ENCODE measurements at regions of chr10 and their contacts with region 1.

Region 1: GRCh38 chr10:86899670-86900276 is 57.6 kb downstream of the MMRN2 start:
- DNase-seq: no peak
- ATAC-seq: peak; percentile 45
- H3K4me3 Mint-ChIP-seq: no peak overlapping the region
- H3K27ac Mint-ChIP-seq: no peak overlapping the region
- H3K4me1 Mint-ChIP-seq: no peaks in the 10 kb centered on the region
- H3K27me3 Mint-ChIP-seq: no peaks in the 10 kb centered on the region
- CTCF ChIP-seq: peak; percentile 45

Region 2: GRCh38 chr10:86688398-86688921 is 211.3 kb before region 1 on chr10:
- CTCF ChIA-PET with region 1: interaction called, 31 read pairs
- POLR2A ChIA-PET with region 1: no interaction called
- intact Hi-C with region 1: loop called (anchors 1 kb)
- DNase-seq: peak; percentile 32
- ATAC-seq: peak; percentile 93
- H3K4me3 Mint-ChIP-seq: peak overlapping the region; percentile 24
- H3K27ac Mint-ChIP-seq: no peak overlapping the region
- H3K4me1 Mint-ChIP-seq: peaks cover 2% of the 10 kb centered on the region
- H3K27me3 Mint-ChIP-seq: peaks cover 6% of the 10 kb centered on the region
- CTCF ChIP-seq: peak; percentile 59

Region 3: DNA sequence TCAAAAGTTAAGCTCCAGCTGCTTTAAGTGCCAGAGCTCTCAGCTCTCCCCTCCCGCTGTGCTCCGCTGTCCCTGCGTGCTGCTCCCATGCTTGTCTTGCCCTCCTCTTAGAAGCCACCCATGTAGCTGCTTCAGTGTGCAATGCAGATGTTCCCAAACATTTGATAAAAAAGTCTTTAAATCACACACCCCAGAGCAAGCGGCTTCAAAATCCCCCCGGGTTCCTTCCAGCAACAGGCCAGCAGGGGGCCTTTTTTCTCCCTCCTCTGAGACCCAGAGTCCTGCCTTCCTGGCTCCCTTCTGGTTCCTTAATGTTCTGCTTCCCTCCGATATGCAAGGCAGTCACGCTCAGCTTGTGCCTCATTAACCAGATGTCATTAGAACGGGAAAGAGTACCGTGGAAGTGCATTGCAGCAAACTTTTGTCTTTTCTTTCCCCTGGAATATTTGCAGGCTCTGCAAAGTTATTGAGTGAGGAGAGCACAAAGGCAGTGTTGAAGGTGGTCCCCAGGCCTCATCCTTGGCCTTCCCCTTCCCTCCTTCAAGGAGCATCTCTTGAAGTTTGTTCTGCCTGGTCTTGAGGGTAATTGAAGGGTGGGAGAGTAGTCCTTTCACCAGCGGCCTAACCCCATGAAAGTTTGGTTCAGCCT is 205.9 kb before region 1 on chr10:
- CTCF ChIA-PET with region 1: interaction called, 31 read pairs
- POLR2A ChIA-PET with region 1: no interaction called
- intact Hi-C with region 1: loop called (anchors 1 kb)
- DNase-seq: no peak
- ATAC-seq: no peak
- H3K4me3 Mint-ChIP-seq: no peak overlapping the region
- H3K27ac Mint-ChIP-seq: no peak overlapping the region
- H3K4me1 Mint-ChIP-seq: no peaks in the 10 kb centered on the region
- H3K27me3 Mint-ChIP-seq: no peaks in the 10 kb centered on the region
- CTCF ChIP-seq: no peak

Region 4: GRCh38 chr10:86888585-86889381 is 11.0 kb before region 1 on chr10:
- CTCF ChIA-PET with region 1: interaction called, 15 read pairs
- POLR2A ChIA-PET with region 1: no interaction called
- intact Hi-C with region 1: no loop called
- DNase-seq: no peak
- ATAC-seq: peak; percentile 97
- H3K4me3 Mint-ChIP-seq: peak overlapping the region; percentile 5
- H3K27ac Mint-ChIP-seq: peak overlapping the region; percentile 35
- H3K4me1 Mint-ChIP-seq: peaks cover 8% of the 10 kb centered on the region
- H3K27me3 Mint-ChIP-seq: no peaks in the 10 kb centered on the region
- CTCF ChIP-seq: no peak

Region 5: DNA sequence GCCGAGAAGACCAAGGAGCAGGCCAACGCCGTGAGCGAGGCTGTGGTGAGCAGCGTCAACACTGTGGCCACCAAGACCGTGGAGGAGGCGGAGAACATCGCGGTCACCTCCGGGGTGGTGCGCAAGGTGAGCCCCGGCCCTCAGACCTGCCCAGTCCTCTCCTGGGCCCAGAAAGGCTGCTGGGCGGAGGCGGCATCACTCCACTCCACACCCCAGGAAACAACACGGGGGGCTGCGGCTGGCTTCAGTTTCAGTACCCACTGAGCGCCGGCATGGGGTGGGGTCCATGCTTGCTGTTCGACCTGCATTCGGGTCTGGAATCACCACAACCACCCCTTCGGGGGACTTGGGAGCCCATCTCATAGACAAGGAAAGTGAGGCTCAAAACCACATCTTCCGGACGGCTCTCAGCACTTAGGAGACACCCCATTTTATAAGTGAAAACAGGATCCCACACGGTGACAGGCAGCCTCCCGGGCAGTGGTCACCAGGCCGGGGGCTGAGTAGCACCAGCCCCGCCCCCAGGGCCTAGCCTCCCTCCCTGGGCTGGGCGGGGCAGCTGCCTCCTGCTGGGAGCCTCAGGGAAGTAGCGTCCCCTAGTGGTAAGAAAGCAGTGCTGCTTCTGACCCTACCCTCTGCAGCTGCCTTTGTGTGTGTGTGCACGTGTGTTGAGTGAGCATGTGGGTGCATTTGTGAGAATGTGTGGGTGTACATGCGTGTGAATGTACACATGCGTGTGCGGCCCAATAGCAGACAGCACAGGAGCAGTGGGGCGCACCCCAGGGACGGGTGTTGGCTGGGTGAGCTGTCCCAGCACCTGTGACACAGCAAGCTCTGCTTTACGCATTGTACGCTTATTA is 60.5 kb after region 1 on chr10:
- CTCF ChIA-PET with region 1: no interaction called
- POLR2A ChIA-PET with region 1: no interaction called
- intact Hi-C with region 1: no loop called
- DNase-seq: no peak
- ATAC-seq: peak; percentile 69
- H3K4me3 Mint-ChIP-seq: no peak overlapping the region
- H3K27ac Mint-ChIP-seq: no peak overlapping the region
- H3K4me1 Mint-ChIP-seq: peaks cover 9% of the 10 kb centered on the region
- H3K27me3 Mint-ChIP-seq: peaks cover 5% of the 10 kb centered on the region
- CTCF ChIP-seq: no peak

Measured in activated B cell treated with CpG ODN at 0.5 μM for 24 hours (primary cell).